ENCODE measurements at regions of chr17 and their contacts with region 1.

Region 1: GRCh38 chr17:27654654-27655524 is 23.9 kb downstream of the LGALS9 start:
- DNase-seq: peak; percentile 79
- H3K4me3 ChIP-seq: no peak overlapping the region
- H3K27ac ChIP-seq: no peak overlapping the region
- H3K4me1 ChIP-seq: no peaks in the 10 kb centered on the region
- H3K27me3 ChIP-seq: no peaks in the 10 kb centered on the region
- CTCF ChIP-seq: peak; percentile 90 to 97 (median 94)
- EP300 ChIP-seq: no peak
- POLR2A ChIP-seq: no peak

Region 2: GRCh38 chr17:27578718-27579085 is 76.2 kb before region 1 on chr17:
- in situ Hi-C with region 1: no loop called
- intact Hi-C with region 1: no loop called
- DNase-seq: no peak
- H3K4me3 ChIP-seq: no peak overlapping the region
- H3K27ac ChIP-seq: no peak overlapping the region
- H3K4me1 ChIP-seq: peaks cover 0 to 15% (median 12%) of the 10 kb centered on the region in 4 donors
- H3K27me3 ChIP-seq: no peaks in the 10 kb centered on the region
- CTCF ChIP-seq: no peak
- EP300 ChIP-seq: no peak
- POLR2A ChIP-seq: no peak

Region 3: DNA sequence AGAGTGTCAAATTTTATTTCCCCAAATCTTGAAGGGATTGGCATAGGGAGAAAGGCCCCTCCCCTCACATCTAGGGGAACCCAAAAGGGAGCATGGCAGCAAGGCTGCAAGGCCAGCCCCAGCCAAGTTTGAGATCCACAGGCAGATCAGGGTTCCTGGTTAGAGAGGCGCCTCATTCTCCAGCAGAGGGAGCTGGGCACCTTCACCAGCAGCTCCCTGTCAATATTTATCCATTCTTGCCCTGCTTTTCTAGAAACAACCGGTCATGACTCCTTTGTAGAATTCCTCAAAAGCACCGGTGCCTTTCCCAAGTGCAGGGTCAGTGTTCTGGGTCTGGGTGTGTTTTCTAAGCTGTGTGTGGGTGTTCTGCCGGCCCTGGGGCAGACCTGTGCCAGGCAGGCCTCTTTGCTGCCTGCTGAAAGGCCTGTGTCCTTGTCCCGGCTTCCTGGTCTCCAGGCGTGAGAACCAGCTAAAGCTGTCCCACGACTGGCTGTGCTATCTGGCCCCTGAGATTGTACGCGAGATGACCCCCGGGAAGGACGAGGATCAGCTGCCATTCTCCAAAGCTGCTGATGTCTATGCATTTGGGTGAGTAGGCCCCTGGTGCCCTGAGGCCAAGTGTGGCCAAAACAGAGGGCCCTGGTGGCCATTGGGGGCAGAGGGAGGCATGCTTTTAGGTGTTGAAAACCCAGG is 45.1 kb before region 1 on chr17:
- in situ Hi-C with region 1: loop called (anchors 5 to 10 kb)
- intact Hi-C with region 1: no loop called
- DNase-seq: peak; percentile 69
- H3K4me3 ChIP-seq: no peak overlapping the region
- H3K27ac ChIP-seq: peak overlapping the region in 3 of 4 donors; percentile 25 to 48 (median 30)
- H3K4me1 ChIP-seq: peaks cover 0 to 25% (median 2%) of the 10 kb centered on the region in 4 donors
- H3K27me3 ChIP-seq: no peaks in the 10 kb centered on the region
- CTCF ChIP-seq: peak; percentile 43 to 88 (median 69)
- EP300 ChIP-seq: no peak
- POLR2A ChIP-seq: no peak

Region 4: GRCh38 chr17:27760069-27760885 is 105.4 kb after region 1 on chr17:
- in situ Hi-C with region 1: loop called in 1 of 4 experiments (anchors 10 kb)
- intact Hi-C with region 1: loop called (anchors 5 kb)
- DNase-seq: peak; percentile 69
- H3K4me3 ChIP-seq: no peak overlapping the region
- H3K27ac ChIP-seq: no peak overlapping the region
- H3K4me1 ChIP-seq: no peaks in the 10 kb centered on the region
- H3K27me3 ChIP-seq: no peaks in the 10 kb centered on the region
- CTCF ChIP-seq: peak; percentile 83 to 94 (median 90)
- EP300 ChIP-seq: no peak
- POLR2A ChIP-seq: no peak

Measured in transverse colon (tissue), 4 donors.